ENCODE measurements at regions of chr6 and their contacts with region 1.

Region 1: DNA sequence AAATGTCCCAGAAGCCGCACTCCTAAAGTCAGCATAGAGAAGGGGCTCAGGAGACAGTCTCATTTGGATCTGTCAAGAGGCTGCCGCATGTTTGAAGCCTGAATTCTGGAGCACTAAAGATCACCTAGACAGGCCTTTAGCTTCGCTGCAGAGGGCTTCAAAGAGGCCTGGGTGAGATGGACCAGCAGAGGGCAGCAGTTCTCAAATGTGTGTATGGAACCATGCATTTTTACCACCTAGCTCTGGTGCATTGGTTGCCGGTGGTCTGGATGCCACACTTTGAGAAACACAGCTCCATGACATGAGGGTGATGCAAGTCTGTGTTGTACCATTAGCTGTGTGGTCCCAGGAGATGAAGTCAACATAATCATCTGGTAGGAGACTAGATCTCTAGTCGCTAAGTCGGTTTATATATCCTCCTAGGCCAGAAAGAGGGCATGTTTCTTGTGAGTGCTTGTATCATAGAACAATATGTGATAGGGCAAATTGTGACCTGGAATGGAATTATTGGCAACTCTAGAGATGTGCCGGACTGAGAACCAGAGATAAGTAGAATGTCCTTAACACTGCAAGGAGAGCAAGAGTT is 64.8 kb downstream of the KIAA0319 start:
- DNase-seq: peak; percentile 84
- ATAC-seq: peak; percentile 88
- H3K4me3 ChIP-seq: no peak overlapping the region
- H3K27ac ChIP-seq: no peak overlapping the region
- H3K4me1 ChIP-seq: peaks cover 16% of the 10 kb centered on the region
- H3K27me3 ChIP-seq: no peaks in the 10 kb centered on the region
- CTCF ChIP-seq: peak; percentile 94

Region 2: DNA sequence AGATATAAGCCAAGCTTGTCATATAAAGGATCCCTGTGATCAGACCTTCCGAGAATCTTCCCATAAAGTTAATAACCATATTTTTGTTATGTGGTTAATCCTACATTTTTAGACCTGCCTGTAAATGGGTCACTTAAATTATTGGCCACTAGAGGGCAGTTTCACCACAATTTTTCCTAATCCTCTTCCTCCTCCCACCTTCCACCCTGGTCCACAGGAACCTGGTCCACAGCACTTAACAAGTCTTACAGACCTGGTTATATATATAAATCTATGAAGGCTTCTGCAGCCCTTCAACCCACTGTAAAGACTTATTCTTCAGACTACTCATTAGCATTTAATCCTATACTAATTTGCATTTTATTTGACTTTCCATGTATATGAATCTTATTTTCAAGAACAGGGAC is 150.1 kb before region 1 on chr6:
- CTCF ChIA-PET with region 1: interaction called, 3 read pairs
- POLR2A ChIA-PET with region 1: no interaction called
- intact Hi-C with region 1: loop called (anchors 10 kb)
- DNase-seq: peak; percentile 74
- ATAC-seq: peak; percentile 27; the same call in 1 of the 2 replicates
- H3K4me3 ChIP-seq: no peak overlapping the region
- H3K27ac ChIP-seq: no peak overlapping the region
- H3K4me1 ChIP-seq: peaks cover 37% of the 10 kb centered on the region
- H3K27me3 ChIP-seq: no peaks in the 10 kb centered on the region
- CTCF ChIP-seq: peak; percentile 89

Region 3: GRCh38 chr6:24646782-24647181 is 65.6 kb after region 1 on chr6:
- CTCF ChIA-PET with region 1: interaction called, 3 read pairs
- POLR2A ChIA-PET with region 1: no interaction called
- intact Hi-C with region 1: loop called (anchors 2 kb)
- DNase-seq: peak; percentile 86
- ATAC-seq: peak; percentile 85
- H3K4me3 ChIP-seq: peak overlapping the region; percentile 77
- H3K27ac ChIP-seq: peak overlapping the region; percentile 16; the same call in 1 of the 2 replicates
- H3K4me1 ChIP-seq: peaks cover 24% of the 10 kb centered on the region
- H3K27me3 ChIP-seq: no peaks in the 10 kb centered on the region
- CTCF ChIP-seq: no peak

Region 4: DNA sequence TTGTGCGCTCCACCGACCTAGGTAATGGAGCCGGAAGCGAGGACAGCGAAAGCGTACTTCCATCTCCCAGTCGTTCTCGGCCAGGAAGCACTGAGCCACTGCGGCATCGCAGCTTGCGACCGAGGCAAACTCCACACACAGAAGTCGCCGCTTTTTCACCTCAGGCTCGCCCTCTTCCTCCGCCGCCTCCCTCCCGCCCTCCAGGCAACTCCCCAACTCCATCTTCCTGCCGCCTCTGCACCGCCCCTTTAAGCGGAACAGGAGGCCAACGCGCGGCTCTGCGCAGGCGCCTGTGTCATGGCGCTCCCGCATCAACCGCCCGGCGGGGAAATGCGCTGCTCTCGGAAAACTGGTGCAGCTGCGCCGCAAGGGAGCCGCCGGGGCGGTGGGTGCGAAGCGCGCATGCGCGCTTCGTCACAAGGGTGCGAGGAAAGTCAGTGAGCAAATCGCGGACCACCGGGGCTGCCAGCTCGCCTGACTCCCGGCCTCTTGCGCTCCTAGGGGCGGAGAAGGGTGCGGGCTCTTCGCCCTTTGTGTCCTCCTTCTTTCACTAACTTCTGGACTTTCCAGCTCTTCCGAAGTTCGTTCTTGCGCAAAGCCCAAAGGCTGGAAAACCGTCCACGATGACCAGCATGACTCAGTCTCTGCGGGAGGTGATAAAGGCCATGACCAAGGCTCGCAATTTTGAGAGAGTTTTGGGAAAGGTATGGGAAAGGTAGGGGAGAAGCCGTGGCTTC is 85.6 kb after region 1 on chr6 and contains the starts of genes ACOT13 and TDP2:
- CTCF ChIA-PET with region 1: interaction called, 4 read pairs
- POLR2A ChIA-PET with region 1: no interaction called
- intact Hi-C with region 1: loop called (anchors 1 kb)
- DNase-seq: peak; percentile 98
- ATAC-seq: peak; percentile 95
- H3K4me3 ChIP-seq: peak within 1 kb of the TSS; percentile 97
- H3K27ac ChIP-seq: peak within 1 kb of the TSS; percentile 75
- H3K4me1 ChIP-seq: peaks cover 20% of the 10 kb centered on the region
- H3K27me3 ChIP-seq: no peaks in the 10 kb centered on the region
- CTCF ChIP-seq: peak; percentile 49; the same call in 1 of the 2 replicates
- total RNA-seq, gene ACOT13: 13.5 and 17.9 TPM in 2 replicates
- total RNA-seq, gene TDP2: 20.6 and 24.2 TPM in 2 replicates

Region 5: GRCh38 chr6:24689964-24690363 is 108.8 kb after region 1 on chr6:
- CTCF ChIA-PET with region 1: no interaction called
- POLR2A ChIA-PET with region 1: no interaction called
- intact Hi-C with region 1: loop called (anchors 1 kb)
- DNase-seq: no peak
- ATAC-seq: no peak
- H3K4me3 ChIP-seq: no peak overlapping the region
- H3K27ac ChIP-seq: no peak overlapping the region
- H3K4me1 ChIP-seq: no peaks in the 10 kb centered on the region
- H3K27me3 ChIP-seq: no peaks in the 10 kb centered on the region
- CTCF ChIP-seq: no peak

Region 6: GRCh38 chr6:24766680-24767462 is 185.7 kb after region 1 on chr6:
- CTCF ChIA-PET with region 1: interaction called, 3 read pairs
- POLR2A ChIA-PET with region 1: no interaction called
- intact Hi-C with region 1: loop called (anchors 1 kb)
- DNase-seq: peak; percentile 62
- ATAC-seq: peak; percentile 75
- H3K4me3 ChIP-seq: no peak overlapping the region
- H3K27ac ChIP-seq: no peak overlapping the region
- H3K4me1 ChIP-seq: no peaks in the 10 kb centered on the region
- H3K27me3 ChIP-seq: no peaks in the 10 kb centered on the region
- CTCF ChIP-seq: peak; percentile 84